ENCODE measurements at regions of chr11 and their contacts with region 1.

Region 1: DNA sequence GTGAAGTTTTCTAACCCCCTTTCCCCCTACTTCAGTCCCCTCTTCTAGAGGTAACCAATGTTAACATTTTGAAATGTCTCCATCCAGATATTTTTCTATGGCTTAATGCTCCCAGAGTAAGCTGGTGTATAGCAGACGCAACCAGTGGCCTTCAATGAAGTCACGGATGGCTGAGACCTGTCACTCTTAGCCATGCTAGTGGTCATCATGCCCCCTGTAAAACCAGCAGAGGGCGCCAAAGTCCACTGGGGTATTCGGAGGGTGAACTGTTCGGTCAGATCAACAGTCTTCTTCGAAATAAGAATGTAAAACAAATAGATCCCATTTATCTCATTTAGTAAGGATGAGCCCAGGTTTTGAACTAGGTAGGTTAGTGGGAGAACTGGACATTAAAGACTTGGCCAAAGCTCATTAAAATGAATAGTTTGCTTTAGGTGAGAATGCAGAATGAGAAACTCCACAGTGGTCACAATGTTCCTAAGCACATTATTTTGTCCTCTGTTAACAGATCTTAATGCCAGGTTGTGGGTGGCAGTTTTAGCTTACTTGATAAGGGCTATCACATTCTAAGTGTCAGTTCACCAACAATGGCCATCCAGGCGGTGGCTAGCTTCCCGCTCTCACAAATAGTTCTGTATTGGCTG is 8.6 kb upstream of the MMP8 start:
- DNase-seq: peak; percentile 82
- H3K4me3 Mint-ChIP-seq: no peak overlapping the region
- H3K27ac Mint-ChIP-seq: no peak overlapping the region
- H3K4me1 Mint-ChIP-seq: peaks cover 5% of the 10 kb centered on the region
- H3K27me3 Mint-ChIP-seq: no peaks in the 10 kb centered on the region
- CTCF ChIP-seq: peak; percentile 86

Region 2: DNA sequence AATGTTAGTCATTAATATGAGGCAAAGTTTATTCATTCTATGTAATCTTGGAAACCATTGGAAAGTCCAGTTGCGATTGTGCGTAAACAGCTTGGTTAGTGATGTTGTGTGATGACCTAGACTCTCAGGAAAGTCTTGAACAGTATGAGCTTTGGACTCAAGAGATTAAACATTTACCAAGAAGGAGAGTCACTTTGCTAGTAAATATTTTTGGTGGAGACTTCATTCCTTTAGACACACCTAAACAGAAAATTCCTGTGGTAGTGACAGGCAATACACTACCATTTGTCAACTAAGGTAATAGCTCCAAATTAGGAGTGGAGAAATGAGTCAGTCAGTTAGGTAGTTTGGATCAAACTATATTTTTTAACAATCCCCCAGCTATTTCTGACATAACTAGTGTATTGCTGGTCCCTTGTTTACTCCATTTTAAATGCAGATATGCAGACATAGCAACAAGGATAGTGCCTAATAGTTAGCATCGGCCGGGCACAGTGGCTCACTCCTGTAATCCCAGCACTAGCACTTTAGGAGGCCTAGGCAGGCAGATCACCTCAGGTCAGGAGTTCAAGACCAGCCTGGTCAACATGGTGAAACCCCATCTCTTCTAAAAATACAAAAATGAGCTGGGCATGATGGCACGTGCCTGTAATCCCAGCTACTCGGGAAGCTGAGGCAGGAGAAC is 1957.0 kb before region 1 on chr11:
- CTCF ChIA-PET with region 1: no interaction called
- POLR2A ChIA-PET with region 1: no interaction called
- intact Hi-C with region 1: no loop called
- DNase-seq: peak; percentile 57
- H3K4me3 Mint-ChIP-seq: no peak overlapping the region
- H3K27ac Mint-ChIP-seq: peak overlapping the region; percentile 91
- H3K4me1 Mint-ChIP-seq: peaks cover 20% of the 10 kb centered on the region
- H3K27me3 Mint-ChIP-seq: no peaks in the 10 kb centered on the region
- CTCF ChIP-seq: no peak

Region 3: GRCh38 chr11:102157219-102157618 is 576.1 kb before region 1 on chr11:
- CTCF ChIA-PET with region 1: no interaction called
- POLR2A ChIA-PET with region 1: no interaction called
- intact Hi-C with region 1: no loop called
- DNase-seq: peak; percentile 87
- H3K4me3 Mint-ChIP-seq: no peak overlapping the region
- H3K27ac Mint-ChIP-seq: peak overlapping the region; percentile 39
- H3K4me1 Mint-ChIP-seq: peaks cover 48% of the 10 kb centered on the region
- H3K27me3 Mint-ChIP-seq: no peaks in the 10 kb centered on the region
- CTCF ChIP-seq: no peak

Region 4: GRCh38 chr11:102197670-102198139 is 535.6 kb before region 1 on chr11:
- CTCF ChIA-PET with region 1: no interaction called
- POLR2A ChIA-PET with region 1: no interaction called
- intact Hi-C with region 1: no loop called
- DNase-seq: no peak
- H3K4me3 Mint-ChIP-seq: no peak overlapping the region
- H3K27ac Mint-ChIP-seq: no peak overlapping the region
- H3K4me1 Mint-ChIP-seq: peaks cover 18% of the 10 kb centered on the region
- H3K27me3 Mint-ChIP-seq: no peaks in the 10 kb centered on the region
- CTCF ChIP-seq: no peak

Region 5: DNA sequence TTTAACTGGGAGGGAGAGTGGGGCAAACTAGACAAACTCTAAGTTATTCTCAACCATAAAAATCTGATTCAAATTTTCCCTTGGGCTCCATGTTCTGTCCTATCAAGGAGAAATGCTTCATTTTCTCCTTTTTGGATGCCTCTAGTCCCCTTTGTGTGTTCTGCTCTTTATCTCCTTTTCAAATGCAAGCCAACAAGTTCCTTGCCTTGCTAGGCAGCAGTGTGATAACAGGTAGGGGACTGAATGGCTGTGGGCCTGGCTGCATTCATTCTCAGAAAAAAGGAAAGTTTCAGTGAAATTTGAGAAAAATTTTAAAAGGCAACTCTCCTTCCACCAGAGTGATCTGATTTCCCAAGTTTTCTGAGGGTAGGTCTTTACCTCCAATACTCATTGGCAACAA is 18.3 kb after region 1 on chr11:
- CTCF ChIA-PET with region 1: interaction called, 12 read pairs
- POLR2A ChIA-PET with region 1: no interaction called
- intact Hi-C with region 1: no loop called
- DNase-seq: no peak
- H3K4me3 Mint-ChIP-seq: no peak overlapping the region
- H3K27ac Mint-ChIP-seq: no peak overlapping the region
- H3K4me1 Mint-ChIP-seq: no peaks in the 10 kb centered on the region
- H3K27me3 Mint-ChIP-seq: peaks cover 11% of the 10 kb centered on the region
- CTCF ChIP-seq: no peak

Region 6: GRCh38 chr11:102810945-102811660 is 77.7 kb after region 1 on chr11:
- CTCF ChIA-PET with region 1: interaction called, 15 read pairs
- POLR2A ChIA-PET with region 1: no interaction called
- intact Hi-C with region 1: loop called (anchors 1 kb)
- DNase-seq: peak; percentile 55
- H3K4me3 Mint-ChIP-seq: no peak overlapping the region
- H3K27ac Mint-ChIP-seq: no peak overlapping the region
- H3K4me1 Mint-ChIP-seq: peaks cover 17% of the 10 kb centered on the region
- H3K27me3 Mint-ChIP-seq: no peaks in the 10 kb centered on the region
- CTCF ChIP-seq: peak; percentile 62

Region 7: GRCh38 chr11:102940714-102941588 is 207.6 kb after region 1 on chr11:
- CTCF ChIA-PET with region 1: interaction called, 73 read pairs
- POLR2A ChIA-PET with region 1: no interaction called
- intact Hi-C with region 1: loop called (anchors 1 kb)
- DNase-seq: peak; percentile 80
- H3K4me3 Mint-ChIP-seq: no peak overlapping the region
- H3K27ac Mint-ChIP-seq: no peak overlapping the region
- H3K4me1 Mint-ChIP-seq: no peaks in the 10 kb centered on the region
- H3K27me3 Mint-ChIP-seq: no peaks in the 10 kb centered on the region
- CTCF ChIP-seq: peak; percentile 75

Region 8: GRCh38 chr11:103055221-103055890 is 322.0 kb after region 1 on chr11:
- CTCF ChIA-PET with region 1: interaction called, 4 read pairs
- POLR2A ChIA-PET with region 1: no interaction called
- intact Hi-C with region 1: loop called (anchors 1 kb)
- DNase-seq: peak; percentile 42
- H3K4me3 Mint-ChIP-seq: no peak overlapping the region
- H3K27ac Mint-ChIP-seq: no peak overlapping the region
- H3K4me1 Mint-ChIP-seq: no peaks in the 10 kb centered on the region
- H3K27me3 Mint-ChIP-seq: no peaks in the 10 kb centered on the region
- CTCF ChIP-seq: peak; percentile 36